BJ (cell line): ENCODE measurements at regions of chr6 and their contacts with region 1.

Region 1: GRCh38 chr6:38387971-38388370 is 251.8 kb downstream of the BTBD9 start:
- DNase-seq: peak; percentile 88
- H3K4me3 ChIP-seq: no peak overlapping the region
- H3K27me3 ChIP-seq: no peaks in the 10 kb centered on the region
- CTCF ChIP-seq: no peak

Region 2: GRCh38 chr6:37761554-37762263 is 626.3 kb before region 1 on chr6:
- CTCF ChIA-PET with region 1: no interaction called
- POLR2A ChIA-PET with region 1: interaction called, 10 read pairs
- DNase-seq: no peak
- H3K4me3 ChIP-seq: no peak overlapping the region
- H3K27me3 ChIP-seq: peaks cover 24% of the 10 kb centered on the region
- CTCF ChIP-seq: no peak

Region 3: GRCh38 chr6:38354905-38355304 is 33.1 kb before region 1 on chr6:
- CTCF ChIA-PET with region 1: no interaction called
- POLR2A ChIA-PET with region 1: interaction called, 14 read pairs
- DNase-seq: no peak
- H3K4me3 ChIP-seq: no peak overlapping the region
- H3K27me3 ChIP-seq: no peaks in the 10 kb centered on the region
- CTCF ChIP-seq: no peak